ENCODE measurements at regions of chr14 and their contacts with region 1.

Region 1: DNA sequence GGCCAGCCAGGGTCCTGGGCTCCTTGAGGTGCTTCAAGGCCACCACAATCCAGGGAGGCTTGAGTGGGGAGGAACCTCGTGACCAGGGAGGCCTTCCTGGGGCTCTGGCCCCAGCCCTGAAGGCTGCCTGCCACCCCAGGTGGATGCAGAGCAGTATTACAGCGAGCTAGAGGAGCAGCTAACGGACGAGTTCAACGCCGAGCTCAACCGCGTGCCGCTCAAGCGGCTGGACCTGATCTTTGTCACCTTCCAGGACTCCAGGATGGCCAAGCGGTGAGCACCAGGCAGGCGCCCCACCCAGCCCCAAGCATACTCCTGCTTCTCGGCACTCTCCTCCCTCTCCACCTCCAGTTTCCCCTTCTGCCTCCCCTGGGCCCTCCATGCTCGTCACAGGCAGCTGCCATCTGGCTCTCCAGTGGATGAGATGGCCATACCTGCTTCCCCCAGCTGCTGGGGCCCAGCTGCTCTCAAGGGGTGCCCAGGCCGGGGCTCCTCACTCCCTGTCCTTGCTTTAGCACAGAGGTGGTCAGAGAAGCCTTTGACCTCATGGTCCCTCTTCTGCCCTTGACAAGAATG is 30.6 kb downstream of the NGB start:
- DNase-seq: no peak
- H3K4me3 ChIP-seq: no peak overlapping the region
- H3K27ac ChIP-seq: no peak overlapping the region
- H3K4me1 ChIP-seq: no peaks in the 10 kb centered on the region; a peak in 1 of 7 replicates
- H3K27me3 ChIP-seq: no peaks in the 10 kb centered on the region
- CTCF ChIP-seq: no peak
- EP300 ChIP-seq: no peak
- POLR2A ChIP-seq: no peak
- RAD21 ChIP-seq: 0 out of 4 replicates have a peak, but pooled peaks of 1 of the 2 experiments have one; percentile 4

Region 2: DNA sequence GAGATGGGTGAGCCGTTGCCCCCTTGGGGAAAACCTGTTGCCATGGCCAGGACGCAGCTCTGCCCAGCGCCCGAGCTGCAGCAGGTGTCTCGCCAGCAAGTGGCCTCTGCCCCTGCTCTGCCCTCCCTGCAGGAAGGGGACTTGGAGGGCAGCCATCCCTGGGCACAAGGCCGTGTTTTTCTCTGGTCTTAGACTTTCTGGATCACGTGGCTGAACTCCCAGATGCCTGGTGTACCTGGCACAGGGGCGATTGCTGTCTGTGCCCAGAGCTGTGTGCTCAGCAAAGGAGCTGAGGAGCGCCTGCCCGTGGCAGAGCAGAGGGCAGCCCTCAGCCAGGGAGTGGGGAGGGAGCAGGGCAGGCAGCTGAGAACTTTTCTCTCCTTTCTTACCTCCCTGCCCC is 20.8 kb before region 1 on chr14:
- CTCF ChIA-PET with region 1: interaction called, 52 read pairs
- POLR2A ChIA-PET with region 1: interaction called, 3 read pairs
- DNase-seq: no peak
- H3K4me3 ChIP-seq: no peak overlapping the region
- H3K27ac ChIP-seq: no peak overlapping the region
- H3K4me1 ChIP-seq: peaks cover 18 to 38% (median 27%) of the 10 kb centered on the region in 4 experiments
- H3K27me3 ChIP-seq: no peaks in the 10 kb centered on the region
- CTCF ChIP-seq: no peak
- EP300 ChIP-seq: no peak
- POLR2A ChIP-seq: no peak
- RAD21 ChIP-seq: no peak

Region 3: DNA sequence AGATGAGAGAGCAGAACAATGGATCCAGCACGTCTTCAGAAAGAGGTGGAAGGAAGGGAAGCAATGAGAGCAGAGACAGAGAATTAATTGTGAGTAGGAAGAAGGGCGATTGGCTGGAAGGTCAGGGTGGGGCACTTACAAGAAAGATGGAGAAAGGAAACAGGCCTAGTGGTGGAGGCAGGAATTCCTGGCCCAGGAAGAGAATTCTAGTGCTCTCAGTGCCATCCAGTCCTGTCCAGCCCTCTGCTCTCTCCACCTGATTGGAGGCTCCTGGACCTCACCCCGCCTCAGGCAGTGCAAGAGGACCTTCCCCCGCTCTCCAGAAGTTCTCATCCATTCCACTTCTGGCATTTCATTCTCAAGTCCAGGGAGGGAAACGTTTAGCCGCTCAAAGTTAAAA is 12.4 kb before region 1 on chr14:
- CTCF ChIA-PET with region 1: interaction called, 26 read pairs
- POLR2A ChIA-PET with region 1: interaction called, 3 read pairs
- DNase-seq: no peak
- H3K4me3 ChIP-seq: no peak overlapping the region
- H3K27ac ChIP-seq: no peak overlapping the region
- H3K4me1 ChIP-seq: peaks cover 7 to 19% (median 11%) of the 10 kb centered on the region in 4 experiments
- H3K27me3 ChIP-seq: no peaks in the 10 kb centered on the region
- CTCF ChIP-seq: peak in 1 of 3 experiments; percentile 21; a peak in 1 of 4 replicates
- EP300 ChIP-seq: no peak
- POLR2A ChIP-seq: no peak
- RAD21 ChIP-seq: no peak

Region 4: DNA sequence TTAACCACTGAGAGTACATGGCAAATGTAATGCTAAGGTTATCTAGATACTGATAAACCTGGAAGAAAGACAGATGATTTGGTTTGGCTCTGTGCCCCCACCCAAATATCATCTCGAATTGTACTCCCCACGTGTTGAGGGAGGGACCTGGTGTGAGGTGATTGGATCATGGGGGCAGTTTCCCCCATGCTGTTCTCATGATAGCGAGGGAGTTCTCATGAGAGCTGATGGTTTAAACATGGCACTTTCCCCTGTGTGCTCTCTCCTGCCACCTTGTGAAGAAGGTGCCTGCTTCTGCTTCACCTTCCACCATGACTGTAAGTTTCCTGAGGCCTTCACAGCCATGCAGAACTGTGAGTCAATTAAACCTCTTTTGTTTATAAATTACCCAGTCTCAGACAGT is 168.7 kb after region 1 on chr14:
- CTCF ChIA-PET with region 1: no interaction called
- POLR2A ChIA-PET with region 1: no interaction called
- DNase-seq: peak in 1 of 2 experiments; percentile 50
- H3K4me3 ChIP-seq: no peak overlapping the region
- H3K27ac ChIP-seq: no peak overlapping the region
- H3K4me1 ChIP-seq: no peaks in the 10 kb centered on the region
- H3K27me3 ChIP-seq: no peaks in the 10 kb centered on the region
- CTCF ChIP-seq: peak; percentile 41 to 56 (median 52)
- EP300 ChIP-seq: no peak
- POLR2A ChIP-seq: no peak
- RAD21 ChIP-seq: peak in 1 of 2 experiments; percentile 52; a peak in 2 of 4 replicates